Right cardiac atrium (tissue), 5 donors: ENCODE measurements at regions of chr10 and their contacts with region 1.

Region 1: GRCh38 chr10:119028900-119029612 is 458 bp upstream of the NANOS1 start:
- DNase-seq: peak; percentile 92 to 96 (median 96)
- ATAC-seq: peak; percentile 86 to 88
- H3K4me3 ChIP-seq: peak overlapping the region; percentile 85
- H3K27ac ChIP-seq: peak overlapping the region; percentile 44
- H3K4me1 ChIP-seq: peaks cover 7% of the 10 kb centered on the region
- H3K27me3 ChIP-seq: no peaks in the 10 kb centered on the region

Region 2: DNA sequence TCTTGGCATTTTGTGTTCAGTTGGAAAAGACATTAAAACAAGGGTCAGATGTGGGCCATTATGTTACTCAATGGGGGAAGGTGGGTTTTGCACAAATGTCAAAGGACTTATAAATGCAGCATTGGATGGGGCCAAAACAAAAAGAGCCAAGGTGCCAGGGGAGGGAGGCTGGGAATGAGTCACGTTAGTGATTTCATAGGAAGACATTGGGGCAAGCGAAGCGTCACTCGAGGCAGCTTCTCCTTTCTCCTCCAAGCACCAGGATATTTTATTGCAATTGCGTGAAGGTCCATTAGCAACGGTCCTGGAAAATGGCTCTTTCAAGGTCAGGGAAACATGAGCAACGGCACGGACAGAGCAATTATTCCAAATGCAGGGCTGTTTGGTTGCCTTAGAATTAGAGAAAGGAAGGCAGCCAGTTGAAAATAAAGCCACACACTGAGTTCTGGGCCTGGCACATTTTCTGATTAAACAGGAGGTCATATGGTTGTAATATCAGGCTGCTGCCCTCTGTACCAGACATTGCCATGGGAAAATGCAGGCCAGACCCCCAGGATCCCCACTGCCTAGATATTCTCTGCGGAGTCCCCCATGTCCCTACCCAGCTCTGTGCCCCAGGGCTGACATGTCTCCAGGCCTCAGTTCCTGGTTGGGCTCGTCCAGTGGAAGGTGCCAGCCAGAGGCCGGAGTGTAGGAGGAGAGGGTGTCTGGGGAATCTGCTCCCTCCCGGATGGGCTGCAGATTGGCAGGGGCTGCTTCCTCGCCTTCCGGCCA is 62.8 kb before region 1 on chr10:
- intact Hi-C with region 1: loop called in 1 of 4 experiments (anchors 5 kb)
- DNase-seq: peak; percentile 45 to 81 (median 76)
- ATAC-seq: peak; percentile 82 to 85
- H3K4me3 ChIP-seq: no peak overlapping the region
- H3K27ac ChIP-seq: peak overlapping the region; percentile 62
- H3K4me1 ChIP-seq: peaks cover 5% of the 10 kb centered on the region
- H3K27me3 ChIP-seq: no peaks in the 10 kb centered on the region

Region 3: GRCh38 chr10:119079632-119080520 is 50.8 kb after region 1 on chr10:
- intact Hi-C with region 1: loop called in 1 of 4 experiments (anchors 5 kb)
- DNase-seq: peak; percentile 79 to 90 (median 89)
- ATAC-seq: peak; percentile 93
- H3K4me3 ChIP-seq: peak overlapping the region; percentile 79
- H3K27ac ChIP-seq: peak overlapping the region; percentile 92
- H3K4me1 ChIP-seq: no peaks in the 10 kb centered on the region
- H3K27me3 ChIP-seq: no peaks in the 10 kb centered on the region